Sigmoid colon (tissue), 7 donors: ENCODE measurements at regions of chr9 and their contacts with region 1.

Region 1: DNA sequence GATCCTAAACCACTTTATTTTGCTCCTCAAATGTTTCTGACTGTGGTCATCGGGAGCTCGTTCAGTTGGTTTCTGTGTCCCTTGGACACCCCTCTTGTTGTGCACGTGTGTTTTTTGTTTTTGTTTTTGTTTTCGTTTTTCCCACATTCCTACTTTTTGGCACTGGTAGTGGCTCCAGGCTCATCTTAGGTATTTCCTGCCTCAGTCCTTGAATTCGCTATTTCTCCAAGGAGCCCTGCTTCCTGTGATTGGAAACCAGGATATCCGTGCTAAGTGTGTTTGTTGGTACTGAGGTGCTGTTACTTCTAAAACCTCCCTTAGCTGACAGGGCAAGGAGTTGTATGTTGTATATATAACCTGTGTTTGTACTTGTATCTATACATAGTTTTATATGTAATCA is 5.9 kb downstream of the HMCN2 start:
- DNase-seq: no peak
- H3K4me3 ChIP-seq: peak overlapping the region in 2 of 4 donors; percentile 21 to 24
- H3K27ac ChIP-seq: peak overlapping the region; percentile 80 to 98 (median 88)
- H3K4me1 ChIP-seq: peaks cover 0 to 71% (median 38%) of the 10 kb centered on the region in 4 donors
- H3K27me3 ChIP-seq: no peaks in the 10 kb centered on the region
- CTCF ChIP-seq: no peak
- EP300 ChIP-seq: no peak
- POLR2A ChIP-seq: no peak

Region 2: DNA sequence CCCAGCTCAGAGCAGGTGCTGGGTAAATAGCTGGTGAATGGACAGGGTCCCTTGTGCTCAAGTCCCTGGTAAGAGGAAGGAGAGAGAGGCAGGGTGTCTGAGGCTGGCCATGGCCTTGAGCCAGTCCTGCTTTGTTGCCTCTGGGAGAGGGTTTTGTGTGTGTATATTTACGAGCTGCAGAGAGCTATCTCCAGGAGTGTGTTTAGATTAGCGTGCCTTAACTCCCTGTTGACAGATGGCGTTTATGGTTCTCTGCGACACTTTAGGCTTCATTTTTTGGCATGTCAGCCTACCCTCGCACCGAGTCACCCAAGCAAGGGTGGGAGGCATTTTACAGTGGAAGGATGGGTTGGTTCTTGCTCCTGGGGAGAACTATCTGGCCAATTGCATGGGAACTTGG is 16.3 kb after region 1 on chr9:
- intact Hi-C with region 1: loop called (anchors 2 kb)
- DNase-seq: no peak
- H3K4me3 ChIP-seq: no peak overlapping the region
- H3K27ac ChIP-seq: peak overlapping the region in 3 of 4 donors; percentile 56 to 95 (median 91)
- H3K4me1 ChIP-seq: peaks cover 0 to 92% (median 73%) of the 10 kb centered on the region in 4 donors
- H3K27me3 ChIP-seq: no peaks in the 10 kb centered on the region
- CTCF ChIP-seq: no peak
- EP300 ChIP-seq: no peak
- POLR2A ChIP-seq: no peak